Activated CD4-positive, alpha-beta T cell treated with anti-CD3 and anti-CD28 coated beads for 36 hours (primary cell): ENCODE measurements at regions of chr5 and their contacts with region 1.

Region 1: GRCh38 chr5:67246108-67246507 is 49.5 kb upstream of the CD180 start:
- DNase-seq: no peak
- ATAC-seq: peak; percentile 33
- H3K4me3 Mint-ChIP-seq: no peak overlapping the region
- H3K27ac Mint-ChIP-seq: no peak overlapping the region
- H3K4me1 Mint-ChIP-seq: peaks cover 8% of the 10 kb centered on the region
- H3K27me3 Mint-ChIP-seq: no peaks in the 10 kb centered on the region

Region 2: GRCh38 chr5:67395790-67396418 is 149.8 kb after region 1 on chr5:
- CTCF ChIA-PET with region 1: no interaction called
- POLR2A ChIA-PET with region 1: no interaction called
- intact Hi-C with region 1: loop called in 1 of 2 experiments (anchors 10 kb)
- DNase-seq: no peak
- ATAC-seq: no peak
- H3K4me3 Mint-ChIP-seq: no peak overlapping the region
- H3K27ac Mint-ChIP-seq: no peak overlapping the region
- H3K4me1 Mint-ChIP-seq: no peaks in the 10 kb centered on the region
- H3K27me3 Mint-ChIP-seq: no peaks in the 10 kb centered on the region

Region 3: DNA sequence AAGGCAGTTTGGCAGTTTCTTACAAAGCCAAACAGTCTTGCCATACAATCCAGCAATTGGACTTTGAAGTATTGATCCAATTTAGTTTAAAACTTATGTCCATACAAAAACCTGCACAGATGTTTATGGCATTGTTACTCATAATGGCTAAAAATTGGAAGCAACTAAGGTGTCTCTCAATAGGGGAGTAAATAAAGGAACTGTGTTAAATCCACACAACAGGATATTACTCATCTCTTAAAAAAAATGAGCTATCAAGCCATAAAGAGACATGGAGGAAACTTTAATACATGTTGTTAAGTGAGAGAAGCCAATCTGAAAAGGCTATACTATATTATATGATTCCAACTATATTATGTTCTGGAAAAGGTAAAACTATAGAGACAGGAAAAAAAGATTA is 264.1 kb after region 1 on chr5:
- CTCF ChIA-PET with region 1: no interaction called
- POLR2A ChIA-PET with region 1: no interaction called
- intact Hi-C with region 1: no loop called
- DNase-seq: no peak
- ATAC-seq: no peak
- H3K4me3 Mint-ChIP-seq: no peak overlapping the region
- H3K27ac Mint-ChIP-seq: no peak overlapping the region
- H3K4me1 Mint-ChIP-seq: peaks cover 40% of the 10 kb centered on the region
- H3K27me3 Mint-ChIP-seq: no peaks in the 10 kb centered on the region

Region 4: GRCh38 chr5:67724412-67725135 is 478.5 kb after region 1 on chr5:
- CTCF ChIA-PET with region 1: no interaction called
- POLR2A ChIA-PET with region 1: no interaction called
- intact Hi-C with region 1: loop called in 1 of 2 experiments (anchors 10 kb)
- DNase-seq: no peak
- ATAC-seq: no peak
- H3K4me3 Mint-ChIP-seq: no peak overlapping the region
- H3K27ac Mint-ChIP-seq: no peak overlapping the region
- H3K4me1 Mint-ChIP-seq: no peaks in the 10 kb centered on the region
- H3K27me3 Mint-ChIP-seq: peaks cover 2% of the 10 kb centered on the region

Region 5: DNA sequence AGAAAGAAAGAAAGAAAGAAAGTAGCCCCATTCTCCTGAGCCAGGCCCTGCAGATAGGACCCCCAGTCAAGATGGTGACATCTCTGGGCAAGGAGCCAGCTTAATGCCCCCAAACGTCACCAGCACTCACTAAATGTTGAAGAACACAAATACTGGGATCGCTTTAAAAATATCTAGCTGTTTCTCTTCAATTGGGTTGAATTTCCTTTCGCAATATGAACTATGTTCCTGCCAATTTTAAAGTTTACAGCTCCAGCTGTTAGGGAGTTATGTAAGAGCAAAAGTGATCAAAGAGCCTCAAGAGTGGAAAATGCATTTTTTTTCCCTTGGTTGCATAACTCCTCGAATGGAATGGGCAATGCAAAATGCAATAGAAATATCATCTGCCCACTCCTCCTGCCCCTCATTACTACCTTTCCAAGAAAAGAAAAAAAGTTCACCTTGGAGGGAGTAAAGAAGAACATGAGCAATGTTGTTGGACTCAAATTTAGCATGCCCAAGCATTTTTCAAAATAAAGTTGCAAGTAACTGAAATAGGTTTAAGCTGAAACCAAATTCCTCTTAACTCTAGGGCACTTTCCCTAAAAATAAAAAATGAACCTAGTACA is 725.2 kb after region 1 on chr5:
- CTCF ChIA-PET with region 1: interaction called, 3 read pairs
- POLR2A ChIA-PET with region 1: no interaction called
- intact Hi-C with region 1: loop called in 1 of 2 experiments (anchors 10 kb)
- DNase-seq: no peak
- ATAC-seq: no peak
- H3K4me3 Mint-ChIP-seq: no peak overlapping the region
- H3K27ac Mint-ChIP-seq: no peak overlapping the region
- H3K4me1 Mint-ChIP-seq: no peaks in the 10 kb centered on the region
- H3K27me3 Mint-ChIP-seq: no peaks in the 10 kb centered on the region

Region 6: DNA sequence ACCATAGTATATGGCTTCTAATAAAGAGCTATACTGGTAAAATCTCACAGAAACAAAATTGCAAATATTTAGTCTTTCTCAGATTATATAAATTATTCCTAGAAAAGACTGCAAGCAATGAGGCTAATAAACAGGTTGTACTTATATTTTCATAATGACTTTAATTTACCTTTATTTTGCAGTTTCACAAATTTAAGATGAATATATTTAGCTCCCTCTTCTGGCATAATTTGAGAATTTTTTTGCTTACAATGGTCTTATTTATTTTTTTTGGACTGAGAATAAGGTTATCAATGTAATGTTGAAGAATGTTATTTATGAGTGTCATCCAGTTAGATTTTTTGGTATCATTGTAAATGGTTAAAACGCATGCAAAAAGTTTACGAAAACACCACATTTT is 1026.2 kb after region 1 on chr5:
- CTCF ChIA-PET with region 1: interaction called, 4 read pairs
- POLR2A ChIA-PET with region 1: no interaction called
- intact Hi-C with region 1: loop called (anchors 1 to 5 kb)
- DNase-seq: no peak
- ATAC-seq: no peak
- H3K4me3 Mint-ChIP-seq: no peak overlapping the region
- H3K27ac Mint-ChIP-seq: no peak overlapping the region
- H3K4me1 Mint-ChIP-seq: peaks cover 81% of the 10 kb centered on the region
- H3K27me3 Mint-ChIP-seq: no peaks in the 10 kb centered on the region

Region 7: DNA sequence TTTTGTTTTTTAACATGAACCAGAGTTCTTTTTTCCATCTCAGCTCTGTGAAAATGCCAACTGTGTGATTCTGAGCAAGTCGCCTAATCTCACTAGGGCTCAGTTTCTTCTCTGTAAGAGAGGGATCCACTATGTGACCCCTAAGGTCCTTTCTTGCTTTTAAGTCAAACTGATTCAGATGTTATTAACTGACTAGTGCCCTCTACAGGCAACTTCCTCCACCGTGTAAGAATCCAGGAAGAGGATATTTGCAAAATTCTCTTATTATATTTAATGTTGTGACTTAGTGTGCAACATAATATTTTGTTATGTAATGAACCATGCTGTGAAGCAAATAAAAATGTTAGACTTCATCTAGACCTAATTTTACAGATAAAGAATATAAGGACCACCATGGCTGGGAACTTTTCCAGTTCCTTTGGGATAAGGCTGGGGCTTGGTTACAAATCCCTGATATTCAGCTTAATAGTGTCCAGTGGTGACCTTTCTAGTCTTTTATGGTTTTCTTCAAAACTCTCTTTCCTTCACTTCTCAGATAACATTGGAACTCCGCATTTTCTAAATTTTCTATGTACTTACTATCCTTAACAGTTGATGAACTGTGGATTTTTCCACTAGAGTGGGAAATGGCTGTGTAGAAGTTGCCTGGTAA is 1214.2 kb after region 1 on chr5:
- CTCF ChIA-PET with region 1: no interaction called
- POLR2A ChIA-PET with region 1: no interaction called
- intact Hi-C with region 1: loop called in 1 of 2 experiments (anchors 2 kb)
- DNase-seq: peak; percentile 53
- ATAC-seq: no peak
- H3K4me3 Mint-ChIP-seq: no peak overlapping the region
- H3K27ac Mint-ChIP-seq: no peak overlapping the region
- H3K4me1 Mint-ChIP-seq: peaks cover 18% of the 10 kb centered on the region
- H3K27me3 Mint-ChIP-seq: no peaks in the 10 kb centered on the region

Region 8: GRCh38 chr5:69007726-69008368 is 1761.7 kb after region 1 on chr5:
- CTCF ChIA-PET with region 1: no interaction called
- POLR2A ChIA-PET with region 1: no interaction called
- intact Hi-C with region 1: loop called in 1 of 2 experiments (anchors 1 kb)
- DNase-seq: peak; percentile 85
- ATAC-seq: peak; percentile 68
- H3K4me3 Mint-ChIP-seq: no peak overlapping the region
- H3K27ac Mint-ChIP-seq: no peak overlapping the region
- H3K4me1 Mint-ChIP-seq: no peaks in the 10 kb centered on the region
- H3K27me3 Mint-ChIP-seq: peaks cover 25% of the 10 kb centered on the region